ENCODE measurements at regions of chr7 and their contacts with region 1.

Region 1: GRCh38 chr7:107678110-107678753 is 17.6 kb downstream of the SLC26A4 start:
- DNase-seq: no peak
- H3K4me3 ChIP-seq: no peak overlapping the region
- CTCF ChIP-seq: no peak

Region 2: GRCh38 chr7:107643407-107643806 is 34.8 kb before region 1 on chr7:
- in situ Hi-C with region 1: loop called (anchors 5 kb)
- DNase-seq: peak; percentile 26
- H3K4me3 ChIP-seq: no peak overlapping the region
- CTCF ChIP-seq: peak; percentile 29

Measured in astrocyte of the cerebellum (primary cell).